Activated CD4-positive, alpha-beta memory T cell treated with anti-CD3 and anti-CD28 coated beads, Interleukin-2, amount 10 ng/mL, durations not matched to agents 7 days and 5 days (primary cell): ENCODE measurements at regions of chr11 and their contacts with region 1.

Region 1: DNA sequence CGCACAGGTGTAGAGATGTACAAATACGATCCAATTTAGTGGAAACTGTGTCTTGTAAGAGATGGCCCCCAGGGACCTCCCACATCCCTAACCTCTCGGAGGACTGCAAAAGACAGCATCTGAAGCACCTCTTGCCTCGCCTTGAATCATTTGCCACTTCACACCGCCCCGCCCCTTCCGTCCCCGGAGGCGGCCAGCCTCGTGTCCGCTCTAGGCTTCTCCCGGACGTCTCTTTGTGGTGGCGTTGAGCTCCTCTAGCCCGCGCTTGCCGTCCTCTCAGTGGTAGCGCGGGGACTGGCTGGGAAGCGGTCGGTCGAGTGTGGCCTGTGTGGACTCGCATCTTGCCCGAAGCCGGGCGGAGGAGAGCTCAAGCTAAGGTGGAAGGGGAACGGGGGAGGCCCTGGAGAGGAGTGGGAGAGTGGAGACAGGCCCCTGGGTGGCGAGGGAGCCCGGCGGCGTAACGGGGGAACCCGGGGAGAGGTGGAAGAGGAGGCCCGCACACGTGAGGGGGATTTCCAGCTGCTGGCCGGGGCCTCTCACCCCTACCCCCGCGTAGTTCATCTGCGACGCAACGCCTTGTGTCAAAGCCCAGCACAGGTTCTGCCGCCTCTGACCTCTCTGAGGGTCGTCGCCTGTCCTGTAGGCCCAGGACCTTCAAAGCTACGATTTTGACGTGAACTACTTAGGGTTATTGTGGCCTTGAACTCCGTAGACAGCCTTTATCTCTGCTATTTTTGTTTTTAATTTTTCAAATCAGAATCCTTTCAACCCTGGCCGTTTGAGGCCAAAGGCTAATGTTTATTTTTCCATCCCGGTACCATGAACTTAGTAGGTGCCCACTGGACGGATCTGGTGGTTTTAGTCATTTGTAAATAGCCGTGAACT is at the start of gene ARL14EP:
- DNase-seq: peak; percentile 91
- H3K4me3 Mint-ChIP-seq: peak within 1 kb of the TSS; percentile 99
- H3K27ac Mint-ChIP-seq: peak within 1 kb of the TSS; percentile 96
- H3K4me1 Mint-ChIP-seq: peaks cover 49% of the 10 kb centered on the region
- H3K27me3 Mint-ChIP-seq: no peaks in the 10 kb centered on the region
- total RNA-seq, gene ARL14EP: 36.0 to 39.9 TPM

Region 2: GRCh38 chr11:30333405-30333804 is 10.3 kb after region 1 on chr11:
- CTCF ChIA-PET with region 1: interaction called, 29 read pairs
- POLR2A ChIA-PET with region 1: interaction called, 14 read pairs
- DNase-seq: no peak
- H3K4me3 Mint-ChIP-seq: no peak overlapping the region
- H3K27ac Mint-ChIP-seq: no peak overlapping the region
- H3K4me1 Mint-ChIP-seq: peaks cover 19% of the 10 kb centered on the region
- H3K27me3 Mint-ChIP-seq: no peaks in the 10 kb centered on the region